Activated CD4-positive, alpha-beta T cell treated with anti-CD3 and anti-CD28 coated beads for 36 hours (primary cell): ENCODE measurements at regions of chr5 and their contacts with region 1.

Region 1: DNA sequence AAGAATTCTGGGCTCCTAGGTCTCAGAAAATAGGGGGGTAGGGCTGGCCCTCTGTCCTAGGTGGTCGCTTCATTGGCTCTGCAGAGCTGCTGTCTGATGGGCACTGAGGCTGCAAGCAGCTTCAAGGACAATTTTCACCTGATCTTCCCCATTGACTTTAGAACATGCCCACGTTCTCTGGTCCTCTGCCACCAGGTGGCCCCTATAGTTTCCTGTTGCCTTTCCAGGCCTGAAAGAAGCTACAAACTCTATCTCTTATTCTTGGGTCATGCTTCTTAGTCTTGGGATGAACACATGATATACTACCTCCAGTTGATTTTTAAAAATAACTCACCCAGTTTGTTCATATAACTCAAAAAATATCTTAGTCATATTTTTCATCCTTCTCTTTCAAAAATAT is 26.3 kb downstream of the SPZ1 start:
- DNase-seq: peak; percentile 60
- ATAC-seq: peak; percentile 79
- H3K4me3 Mint-ChIP-seq: no peak overlapping the region
- H3K27ac Mint-ChIP-seq: no peak overlapping the region
- H3K4me1 Mint-ChIP-seq: no peaks in the 10 kb centered on the region
- H3K27me3 Mint-ChIP-seq: peaks cover 6% of the 10 kb centered on the region

Region 2: GRCh38 chr5:80492741-80493140 is 146.7 kb after region 1 on chr5:
- CTCF ChIA-PET with region 1: no interaction called
- POLR2A ChIA-PET with region 1: no interaction called
- intact Hi-C with region 1: no loop called
- DNase-seq: no peak
- ATAC-seq: no peak
- H3K4me3 Mint-ChIP-seq: no peak overlapping the region
- H3K27ac Mint-ChIP-seq: no peak overlapping the region
- H3K4me1 Mint-ChIP-seq: peaks cover 10% of the 10 kb centered on the region
- H3K27me3 Mint-ChIP-seq: peaks cover 4% of the 10 kb centered on the region

Region 3: DNA sequence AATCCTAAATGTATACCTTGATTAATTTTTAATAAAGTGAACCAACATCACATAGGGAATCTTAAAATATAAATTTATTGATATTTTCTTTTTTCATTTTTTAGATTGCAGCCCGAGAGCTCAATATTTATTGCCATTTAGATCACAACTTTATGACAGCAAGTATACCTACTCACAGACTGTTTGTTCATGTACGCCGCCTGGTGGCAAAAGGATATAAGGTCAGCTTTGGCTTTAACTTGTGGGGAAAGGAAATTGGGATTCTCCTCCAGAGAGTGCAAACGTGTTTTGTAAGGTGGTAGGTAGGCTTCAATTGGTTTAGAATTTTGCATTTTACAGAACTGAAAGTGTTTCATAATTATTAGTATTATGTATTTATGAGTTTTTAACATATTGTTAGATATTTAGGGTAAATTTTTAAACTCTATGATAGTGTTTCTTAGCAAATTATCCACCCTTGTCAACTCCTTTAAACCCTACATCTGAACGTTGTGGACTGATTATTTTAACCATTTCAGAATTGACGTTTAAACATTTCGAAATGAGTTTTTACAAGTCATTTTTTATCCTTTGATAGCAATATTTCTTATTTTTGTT is 326.2 kb after region 1 on chr5:
- CTCF ChIA-PET with region 1: interaction called, 5 read pairs
- POLR2A ChIA-PET with region 1: no interaction called
- intact Hi-C with region 1: loop called in 1 of 2 experiments (anchors 2 kb)
- DNase-seq: peak; percentile 84
- ATAC-seq: peak; percentile 81
- H3K4me3 Mint-ChIP-seq: no peak overlapping the region
- H3K27ac Mint-ChIP-seq: no peak overlapping the region
- H3K4me1 Mint-ChIP-seq: no peaks in the 10 kb centered on the region
- H3K27me3 Mint-ChIP-seq: no peaks in the 10 kb centered on the region